ENCODE measurements at regions of chr13 and their contacts with region 1.

Region 1: DNA sequence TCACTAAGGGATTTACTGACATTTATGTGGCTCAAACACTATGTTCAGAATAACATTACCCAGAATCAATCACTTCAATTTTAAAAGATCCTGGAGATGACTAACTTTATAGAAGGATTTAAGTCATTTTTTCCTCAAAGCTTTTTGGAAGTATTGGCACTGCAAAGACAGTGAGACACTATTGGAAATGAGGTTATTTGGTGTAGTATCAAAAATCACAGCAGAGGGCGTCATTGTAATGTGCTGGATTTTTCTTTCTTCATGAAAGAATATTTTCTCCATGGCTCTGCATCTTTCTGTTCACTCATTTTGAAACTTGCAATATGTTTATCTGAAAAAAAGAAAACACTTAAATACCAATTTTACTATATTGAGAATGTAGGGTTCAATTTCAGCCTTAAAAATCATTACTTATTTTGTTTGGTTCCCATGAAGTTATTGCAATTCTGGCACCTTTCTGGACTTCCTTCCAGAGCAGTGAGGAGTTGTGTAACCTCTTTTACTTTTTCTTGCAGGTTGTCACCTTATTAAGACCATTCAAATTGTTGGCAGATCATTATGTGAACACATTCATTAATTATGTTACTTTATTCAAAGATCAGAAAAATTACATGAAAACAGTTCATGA is 3.7 kb upstream of the CSNK1A1L start:
- DNase-seq: no peak
- H3K4me3 ChIP-seq: no peak overlapping the region
- H3K27ac ChIP-seq: no peak overlapping the region
- H3K4me1 ChIP-seq: peaks cover 0 to 10% (median 0%) of the 10 kb centered on the region in 3 donors
- H3K27me3 ChIP-seq: no peaks in the 10 kb centered on the region
- CTCF ChIP-seq: peak in 5 of 6 experiments; percentile 20 to 71 (median 57)
- POLR2A ChIP-seq: no peak

Region 2: GRCh38 chr13:37602747-37603381 is 493.7 kb after region 1 on chr13:
- intact Hi-C with region 1: loop called (anchors 10 kb)
- DNase-seq: no peak
- H3K4me3 ChIP-seq: no peak overlapping the region
- H3K27ac ChIP-seq: no peak overlapping the region
- H3K4me1 ChIP-seq: peaks cover 0 to 5% (median 0%) of the 10 kb centered on the region in 3 donors
- H3K27me3 ChIP-seq: no peaks in the 10 kb centered on the region
- CTCF ChIP-seq: peak in 5 of 6 experiments; percentile 10 to 66 (median 53)
- POLR2A ChIP-seq: no peak